Activated naive CD4-positive, alpha-beta T cell treated with anti-CD3 and anti-CD28 coated beads for 36 hours (primary cell): ENCODE measurements at regions of chr13 and their contacts with region 1.

Region 1: DNA sequence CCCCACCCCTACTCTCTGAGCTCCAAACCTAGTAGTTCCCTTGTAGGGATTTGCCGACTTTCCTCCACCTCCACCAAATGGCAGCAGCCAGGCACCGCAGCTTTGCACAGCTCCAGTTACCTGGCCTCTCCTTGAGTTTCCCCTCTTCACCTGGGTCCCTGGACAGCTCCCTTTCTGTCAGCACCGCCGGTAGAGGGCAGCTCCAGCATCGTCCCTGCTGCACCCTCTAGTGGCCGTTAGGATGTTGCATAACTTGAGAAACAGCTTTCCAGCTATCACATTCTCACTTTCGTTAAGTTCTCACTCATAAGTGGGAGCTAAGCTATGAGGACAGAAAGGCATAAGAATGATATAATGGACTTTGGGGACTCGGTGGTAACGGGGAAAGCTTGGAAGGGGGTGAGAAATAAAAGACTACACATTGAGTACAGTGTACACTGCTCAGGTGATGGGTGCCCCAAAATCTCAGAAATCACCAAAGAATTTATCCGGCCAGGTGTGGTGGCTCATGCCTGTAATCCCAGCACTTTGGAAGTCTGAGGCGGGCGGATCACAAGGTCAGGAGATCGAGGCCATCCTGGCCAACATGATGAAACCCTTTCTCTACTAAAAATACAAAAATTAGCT is 60.4 kb upstream of the OLFM4 start:
- DNase-seq: peak; percentile 73
- H3K4me3 Mint-ChIP-seq: no peak overlapping the region
- H3K27ac Mint-ChIP-seq: no peak overlapping the region
- H3K4me1 Mint-ChIP-seq: no peaks in the 10 kb centered on the region
- H3K27me3 Mint-ChIP-seq: peaks cover 11% of the 10 kb centered on the region

Region 2: DNA sequence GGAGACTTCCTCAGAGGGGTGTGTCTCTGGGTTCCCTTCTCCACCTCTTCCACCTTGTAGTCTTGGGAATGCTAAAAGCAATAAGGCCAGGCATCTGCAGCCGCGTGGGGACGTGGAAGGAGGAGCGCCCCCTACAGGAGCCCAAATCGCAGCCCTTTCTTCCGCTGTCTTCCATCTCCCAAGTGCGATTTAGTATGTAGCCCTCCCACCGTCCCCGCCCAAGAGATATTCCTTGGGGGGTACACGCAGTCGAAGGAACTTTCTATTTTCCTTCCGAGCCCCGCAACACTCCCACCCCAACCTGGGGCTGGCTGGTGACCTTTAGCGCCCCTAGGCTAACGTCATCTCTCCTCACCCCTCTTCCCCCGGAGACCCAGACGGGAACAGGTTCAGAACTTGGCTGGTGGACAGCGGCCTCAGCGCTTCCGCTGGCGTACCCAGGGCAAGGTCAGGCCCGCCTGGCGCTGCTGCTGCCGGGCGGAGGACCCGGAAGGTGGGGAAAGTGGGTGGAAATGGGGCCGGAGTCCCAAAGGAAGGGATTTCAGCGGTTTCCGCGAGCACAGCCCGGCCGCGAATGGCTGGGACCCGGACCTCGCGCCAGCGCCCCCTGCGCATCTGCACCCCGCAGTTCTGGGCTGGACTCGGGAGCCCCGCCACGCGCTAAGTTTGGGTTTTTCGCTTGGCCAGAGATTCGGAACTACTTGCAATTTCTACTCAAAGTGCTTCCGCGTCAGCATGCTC is 117.6 kb before region 1 on chr13:
- CTCF ChIA-PET with region 1: interaction called, 3 read pairs
- intact Hi-C with region 1: loop called (anchors 2 kb)
- DNase-seq: peak; percentile 69
- H3K4me3 Mint-ChIP-seq: peak overlapping the region; percentile 63
- H3K27ac Mint-ChIP-seq: no peak overlapping the region
- H3K4me1 Mint-ChIP-seq: peaks cover 28% of the 10 kb centered on the region
- H3K27me3 Mint-ChIP-seq: peaks cover 72% of the 10 kb centered on the region

Region 3: DNA sequence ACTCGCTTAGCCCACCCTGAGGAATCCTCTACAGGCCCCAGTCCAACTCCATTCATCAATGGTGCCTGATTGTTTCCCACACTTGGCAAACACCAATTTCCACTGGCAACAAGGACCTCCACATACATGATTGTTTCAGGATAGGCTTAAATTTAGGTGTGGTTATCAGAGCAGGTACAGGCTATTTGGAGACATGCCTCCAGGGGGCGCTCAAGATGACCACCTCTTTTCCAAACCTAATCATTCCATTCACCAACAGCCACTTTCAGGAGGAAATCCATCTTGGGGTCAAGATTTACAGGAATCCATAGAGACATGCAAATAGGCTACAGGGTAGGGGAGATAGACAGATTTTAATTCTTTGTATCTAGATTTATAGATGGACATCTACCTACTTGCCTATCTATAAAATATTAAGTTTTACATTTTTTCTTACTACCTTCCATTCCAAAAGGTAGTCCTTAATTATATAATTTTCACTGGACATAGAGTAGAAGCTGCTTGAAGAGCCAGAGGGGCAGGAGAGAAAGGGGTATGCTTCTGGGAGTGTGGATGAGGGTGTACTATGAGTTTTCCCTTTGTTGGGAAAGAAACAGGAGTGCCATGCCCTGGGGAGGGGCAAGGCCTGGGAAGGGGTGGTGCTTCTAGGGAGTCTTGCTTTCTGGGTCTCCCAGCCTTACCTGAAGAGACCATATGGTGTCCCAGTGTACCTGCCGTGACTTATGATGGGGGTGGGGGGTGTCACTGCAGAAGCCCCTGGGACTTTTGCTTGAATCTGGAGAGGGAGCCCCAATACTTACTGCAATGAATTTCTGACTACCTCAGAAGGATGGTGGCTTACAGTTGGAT is 105.6 kb before region 1 on chr13:
- CTCF ChIA-PET with region 1: no interaction called
- intact Hi-C with region 1: loop called (anchors 1 kb)
- DNase-seq: peak; percentile 35
- H3K4me3 Mint-ChIP-seq: no peak overlapping the region
- H3K27ac Mint-ChIP-seq: no peak overlapping the region
- H3K4me1 Mint-ChIP-seq: no peaks in the 10 kb centered on the region
- H3K27me3 Mint-ChIP-seq: peaks cover 3% of the 10 kb centered on the region

Region 4: DNA sequence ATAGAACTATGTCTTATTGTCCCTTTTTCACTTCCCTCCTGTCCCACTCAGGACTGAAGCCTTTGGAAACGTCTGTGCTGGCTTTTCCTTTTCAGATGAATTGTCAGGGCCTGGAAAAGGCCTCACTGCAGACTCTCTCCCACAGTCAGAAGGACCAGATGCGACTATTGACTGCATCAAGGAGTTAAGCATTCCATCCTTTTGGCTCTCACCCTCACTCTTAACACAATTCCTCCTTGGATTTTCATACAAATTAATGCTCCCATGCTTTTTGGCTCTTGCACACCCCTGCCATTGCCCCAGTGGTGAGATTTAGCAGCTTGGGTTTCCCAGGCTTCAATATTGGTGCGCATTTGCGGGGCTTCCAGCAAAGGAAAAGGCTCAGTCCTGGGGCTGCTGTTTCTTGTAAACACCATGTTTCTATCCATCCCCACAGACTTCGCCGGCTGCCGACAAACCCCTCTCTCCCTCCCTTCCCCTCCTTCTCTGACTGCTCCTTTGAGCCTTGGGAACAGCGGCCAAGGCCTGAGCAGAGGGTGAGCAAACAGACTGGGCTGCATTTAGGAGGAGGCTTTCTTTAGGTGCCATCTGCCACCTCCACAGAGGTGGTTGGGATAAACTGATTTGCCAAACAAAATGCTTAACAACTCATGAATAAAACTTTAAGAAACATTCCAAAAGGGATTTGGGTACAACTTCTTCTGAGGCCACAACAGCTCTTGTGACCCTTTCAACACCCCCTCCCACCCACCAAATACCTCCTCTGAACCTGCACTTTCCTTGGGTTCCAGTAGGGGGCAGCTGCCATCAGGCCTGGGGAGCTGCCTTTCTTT is 71.1 kb before region 1 on chr13:
- CTCF ChIA-PET with region 1: no interaction called
- intact Hi-C with region 1: loop called (anchors 10 kb)
- DNase-seq: peak; percentile 8
- H3K4me3 Mint-ChIP-seq: no peak overlapping the region
- H3K27ac Mint-ChIP-seq: no peak overlapping the region
- H3K4me1 Mint-ChIP-seq: no peaks in the 10 kb centered on the region
- H3K27me3 Mint-ChIP-seq: peaks cover 5% of the 10 kb centered on the region

Region 5: DNA sequence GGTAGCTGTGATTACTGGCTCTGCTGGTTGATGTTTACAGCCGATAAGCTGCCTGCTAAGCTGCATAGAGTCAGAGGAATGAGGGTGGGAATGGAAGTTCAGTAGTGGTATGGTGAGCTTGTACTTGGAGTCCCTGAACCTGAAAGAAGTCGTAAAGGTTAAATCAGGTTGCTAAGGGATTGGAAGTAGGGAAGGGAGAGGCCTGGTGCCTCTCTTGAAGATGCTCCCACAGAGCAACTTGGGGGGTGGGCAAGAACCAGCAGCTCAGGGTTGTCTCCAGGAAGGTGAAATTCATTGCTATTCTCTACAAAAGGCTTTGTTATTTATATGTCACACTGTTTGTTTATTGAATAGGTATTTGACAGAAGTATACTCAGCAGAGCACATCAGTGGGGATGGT is 13.3 kb before region 1 on chr13:
- CTCF ChIA-PET with region 1: interaction called, 11 read pairs
- intact Hi-C with region 1: no loop called
- DNase-seq: no peak
- H3K4me3 Mint-ChIP-seq: no peak overlapping the region
- H3K27ac Mint-ChIP-seq: no peak overlapping the region
- H3K4me1 Mint-ChIP-seq: no peaks in the 10 kb centered on the region
- H3K27me3 Mint-ChIP-seq: peaks cover 3% of the 10 kb centered on the region

Region 6: GRCh38 chr13:52980695-52981094 is 12.5 kb after region 1 on chr13:
- CTCF ChIA-PET with region 1: interaction called, 10 read pairs
- intact Hi-C with region 1: no loop called
- DNase-seq: no peak
- H3K4me3 Mint-ChIP-seq: no peak overlapping the region
- H3K27ac Mint-ChIP-seq: no peak overlapping the region
- H3K4me1 Mint-ChIP-seq: no peaks in the 10 kb centered on the region
- H3K27me3 Mint-ChIP-seq: peaks cover 8% of the 10 kb centered on the region

Region 7: GRCh38 chr13:54687173-54687572 is 1719.0 kb after region 1 on chr13:
- CTCF ChIA-PET with region 1: no interaction called
- intact Hi-C with region 1: no loop called
- DNase-seq: no peak
- H3K4me3 Mint-ChIP-seq: no peak overlapping the region
- H3K27ac Mint-ChIP-seq: no peak overlapping the region
- H3K4me1 Mint-ChIP-seq: no peaks in the 10 kb centered on the region
- H3K27me3 Mint-ChIP-seq: no peaks in the 10 kb centered on the region